ENCODE measurements at regions of chr4 and their contacts with region 1.

Region 1: DNA sequence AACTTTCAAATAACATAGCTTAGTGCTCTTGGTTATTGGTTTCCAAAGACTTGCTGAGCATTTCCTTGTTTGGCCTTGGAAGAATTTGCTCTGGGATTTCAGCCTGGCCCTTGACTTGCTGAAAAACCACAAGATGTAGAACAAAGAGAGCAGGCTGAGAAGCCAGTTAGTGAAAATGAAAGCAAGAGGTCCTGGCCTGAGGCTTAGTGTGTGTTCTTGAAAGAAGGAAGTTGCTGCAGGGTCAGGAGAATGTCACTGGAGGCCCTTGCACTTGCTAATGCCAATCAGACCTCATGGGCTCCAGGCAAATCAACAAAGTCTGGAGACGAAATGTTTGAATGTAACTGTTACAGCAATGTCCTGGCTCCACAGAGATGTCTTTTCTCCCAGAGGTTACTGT is 79.4 kb downstream of the SYNPO2 start:
- DNase-seq: peak; percentile 52 to 83
- H3K4me3 ChIP-seq: no peak overlapping the region
- H3K27ac ChIP-seq: peak overlapping the region; percentile 49
- H3K4me1 ChIP-seq: peaks cover 16% of the 10 kb centered on the region
- H3K27me3 ChIP-seq: no peaks in the 10 kb centered on the region
- CTCF ChIP-seq: no peak

Region 2: DNA sequence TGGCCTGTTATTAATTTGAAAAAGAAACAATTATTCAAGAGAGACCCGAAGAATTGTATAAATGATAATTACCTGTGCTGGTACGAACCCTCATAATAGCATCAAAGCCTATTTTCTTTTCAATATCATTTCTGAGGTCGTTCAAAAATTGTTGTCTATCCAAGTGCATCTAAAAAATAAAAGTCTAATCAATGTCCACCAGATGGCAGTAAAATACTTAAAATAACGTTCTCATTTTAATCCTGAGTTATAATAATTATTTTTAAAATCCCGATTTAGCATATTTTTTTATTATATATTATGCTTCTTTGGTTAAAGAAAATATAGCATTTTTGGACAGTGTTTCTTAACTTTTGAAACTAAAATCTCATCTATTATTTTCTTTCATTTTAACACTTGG is 227.1 kb before region 1 on chr4:
- CTCF ChIA-PET with region 1: no interaction called
- POLR2A ChIA-PET with region 1: no interaction called
- intact Hi-C with region 1: loop called (anchors 1 kb)
- DNase-seq: no peak
- H3K4me3 ChIP-seq: no peak overlapping the region
- H3K27ac ChIP-seq: no peak overlapping the region
- H3K4me1 ChIP-seq: no peaks in the 10 kb centered on the region
- H3K27me3 ChIP-seq: no peaks in the 10 kb centered on the region
- CTCF ChIP-seq: peak; percentile 63

Region 3: DNA sequence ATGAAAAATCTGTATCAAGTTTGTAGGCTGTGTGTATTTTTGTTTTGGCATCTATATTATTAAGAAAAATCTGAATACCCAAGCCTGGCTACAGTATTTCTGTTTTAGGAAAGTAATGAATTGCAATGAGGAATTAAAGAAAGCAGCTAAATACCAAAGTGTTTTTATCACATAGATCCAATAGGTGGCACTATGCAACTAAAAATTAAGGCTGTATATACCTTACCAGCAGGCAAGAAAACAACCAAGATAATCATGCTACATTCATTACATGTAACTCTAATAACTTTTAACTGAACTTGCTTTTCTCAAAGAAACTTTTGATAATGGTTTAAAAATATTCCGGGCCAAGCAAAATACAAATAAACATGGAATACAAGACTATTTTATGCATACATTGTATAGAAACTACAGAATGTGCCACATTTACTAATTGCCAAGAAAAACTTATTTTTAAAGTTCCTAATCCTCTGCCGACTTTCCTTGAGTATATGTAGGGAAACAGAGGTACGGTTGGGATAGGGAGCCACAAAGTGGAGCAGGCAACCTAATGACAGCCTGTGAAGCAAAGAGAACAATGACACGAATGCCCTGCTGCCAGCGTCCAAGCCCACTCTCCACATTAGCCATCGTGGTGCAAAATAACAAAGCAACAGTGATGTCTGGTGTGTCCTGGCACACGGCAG is 195.8 kb before region 1 on chr4:
- CTCF ChIA-PET with region 1: interaction called, 10 read pairs
- POLR2A ChIA-PET with region 1: no interaction called
- intact Hi-C with region 1: loop called (anchors 1 kb)
- DNase-seq: no peak
- H3K4me3 ChIP-seq: no peak overlapping the region
- H3K27ac ChIP-seq: no peak overlapping the region
- H3K4me1 ChIP-seq: peaks cover 9% of the 10 kb centered on the region; the same call in 1 of the 2 replicates
- H3K27me3 ChIP-seq: no peaks in the 10 kb centered on the region
- CTCF ChIP-seq: peak; percentile 63

Region 4: GRCh38 chr4:118888666-118889311 is 79.2 kb before region 1 on chr4 and contains the start of gene SYNPO2:
- CTCF ChIA-PET with region 1: no interaction called
- POLR2A ChIA-PET with region 1: no interaction called
- intact Hi-C with region 1: loop called (anchors 1 kb)
- DNase-seq: peak in 1 of 2 experiments; percentile 36
- H3K4me3 ChIP-seq: no peak within 1 kb of the TSS
- H3K27ac ChIP-seq: no peak within 1 kb of the TSS
- H3K4me1 ChIP-seq: no peaks in the 10 kb centered on the region
- H3K27me3 ChIP-seq: no peaks in the 10 kb centered on the region
- CTCF ChIP-seq: no peak
- total RNA-seq, gene SYNPO2: 0.53 and 0.87 TPM in 2 replicates

Region 5: GRCh38 chr4:119008761-119009160 is 40.8 kb after region 1 on chr4:
- CTCF ChIA-PET with region 1: no interaction called
- POLR2A ChIA-PET with region 1: interaction called, 10 read pairs
- intact Hi-C with region 1: no loop called
- DNase-seq: no peak
- H3K4me3 ChIP-seq: no peak overlapping the region
- H3K27ac ChIP-seq: no peak overlapping the region
- H3K4me1 ChIP-seq: no peaks in the 10 kb centered on the region
- H3K27me3 ChIP-seq: no peaks in the 10 kb centered on the region
- CTCF ChIP-seq: no peak

Region 6: DNA sequence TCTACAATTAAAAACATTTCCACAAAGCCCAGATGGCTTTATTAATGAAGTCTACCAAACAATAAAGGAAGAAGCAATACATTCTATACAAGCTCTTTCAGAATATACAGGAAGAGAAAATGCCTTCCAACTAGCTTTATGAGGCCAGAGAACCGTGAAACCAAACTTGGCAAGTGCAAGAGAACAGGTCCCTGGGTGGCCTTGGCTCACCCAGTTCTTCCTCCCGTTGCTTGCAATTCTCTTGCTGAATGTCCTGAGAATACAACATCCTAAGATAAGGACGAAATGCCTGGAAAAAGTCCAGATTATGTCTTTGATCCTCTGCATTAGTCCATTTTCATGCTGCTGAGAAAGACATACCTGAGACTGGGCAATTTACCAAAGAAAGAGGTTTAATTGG is 893.7 kb after region 1 on chr4:
- CTCF ChIA-PET with region 1: no interaction called
- POLR2A ChIA-PET with region 1: no interaction called
- intact Hi-C with region 1: no loop called
- DNase-seq: no peak
- H3K4me3 ChIP-seq: no peak overlapping the region
- H3K27ac ChIP-seq: no peak overlapping the region
- H3K4me1 ChIP-seq: no peaks in the 10 kb centered on the region
- H3K27me3 ChIP-seq: no peaks in the 10 kb centered on the region
- CTCF ChIP-seq: no peak